ENCODE measurements at regions of chr1 and their contacts with region 1.

Region 1: GRCh38 chr1:236603991-236604904 is at the start of gene HEATR1:
- DNase-seq: peak; percentile 94
- ATAC-seq: peak; percentile 94
- H3K4me3 Mint-ChIP-seq: peak within 1 kb of the TSS; percentile 98
- H3K27ac Mint-ChIP-seq: peak within 1 kb of the TSS; percentile 94
- H3K4me1 Mint-ChIP-seq: peaks cover 21% of the 10 kb centered on the region
- H3K27me3 Mint-ChIP-seq: peaks cover 7% of the 10 kb centered on the region
- total RNA-seq, gene HEATR1: 82.4 to 89.1 TPM

Region 2: DNA sequence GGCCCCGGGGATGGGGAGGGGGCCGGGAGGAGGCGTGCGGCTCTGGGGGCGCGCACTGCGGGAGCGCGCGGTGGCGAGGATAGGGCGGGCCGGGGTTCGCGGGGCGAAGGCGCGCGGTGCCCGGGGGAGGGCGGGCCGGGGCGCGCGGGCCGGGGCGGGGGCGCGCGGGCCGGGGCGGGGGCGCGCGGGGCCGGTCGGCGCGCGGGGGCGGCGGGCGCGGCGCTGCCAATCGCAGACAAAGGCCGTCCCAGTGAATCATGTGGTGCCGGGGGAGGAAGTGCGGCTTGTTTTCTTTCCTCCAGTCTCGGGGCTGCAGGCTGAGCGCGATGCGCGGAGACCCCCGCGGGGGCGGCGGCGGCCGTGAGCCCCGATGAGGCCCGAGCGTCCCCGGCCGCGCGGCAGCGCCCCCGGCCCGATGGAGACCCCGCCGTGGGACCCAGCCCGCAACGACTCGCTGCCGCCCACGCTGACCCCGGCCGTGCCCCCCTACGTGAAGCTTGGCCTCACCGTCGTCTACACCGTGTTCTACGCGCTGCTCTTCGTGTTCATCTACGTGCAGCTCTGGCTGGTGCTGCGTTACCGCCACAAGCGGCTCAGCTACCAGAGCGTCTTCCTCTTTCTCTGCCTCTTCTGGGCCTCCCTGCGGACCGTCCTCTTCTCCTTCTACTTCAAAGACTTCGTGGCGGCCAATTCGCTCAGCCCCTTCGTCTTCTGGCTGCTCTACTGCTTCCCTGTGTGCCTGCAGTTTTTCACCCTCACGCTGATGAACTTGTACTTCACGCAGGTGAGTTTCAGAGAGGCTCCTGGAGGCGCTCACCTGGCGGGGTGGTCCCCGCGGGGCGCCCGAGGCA is 461.8 kb before region 1 on chr1 and contains the start of gene GPR137B:
- CTCF ChIA-PET with region 1: no interaction called
- POLR2A ChIA-PET with region 1: no interaction called
- intact Hi-C with region 1: loop called in 1 of 2 experiments (anchors 5 kb)
- DNase-seq: peak; percentile 78
- ATAC-seq: peak; percentile 67
- H3K4me3 Mint-ChIP-seq: peak within 1 kb of the TSS; percentile 95
- H3K27ac Mint-ChIP-seq: peak within 1 kb of the TSS; percentile 84
- H3K4me1 Mint-ChIP-seq: peaks cover 15% of the 10 kb centered on the region
- H3K27me3 Mint-ChIP-seq: peaks cover 34% of the 10 kb centered on the region
- total RNA-seq, gene GPR137B: 5.0 to 5.6 TPM

Region 3: DNA sequence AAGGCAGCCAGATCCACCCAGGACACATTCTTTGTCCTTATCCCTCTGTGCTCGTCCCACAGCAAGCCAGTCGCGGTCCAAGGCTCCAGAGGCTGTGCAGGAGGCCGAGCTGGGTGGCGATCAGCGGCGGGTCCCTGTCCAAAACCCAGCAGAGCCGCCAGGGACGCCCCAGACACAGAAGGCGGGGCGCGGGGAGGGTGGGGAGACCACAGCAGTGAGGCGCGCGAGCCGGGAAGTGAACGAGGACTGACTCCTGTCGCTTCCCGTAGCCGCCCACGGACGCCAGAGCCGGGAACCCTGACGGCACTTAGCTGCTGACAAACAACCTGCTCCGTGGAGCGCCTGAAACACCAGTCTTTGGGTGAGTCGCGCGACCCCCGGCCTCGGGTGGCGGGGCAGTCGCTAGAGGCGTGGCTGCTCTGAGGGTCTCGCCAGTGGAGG is 80.5 kb before region 1 on chr1 and contains the start of gene LGALS8:
- CTCF ChIA-PET with region 1: interaction called, 4 read pairs
- POLR2A ChIA-PET with region 1: interaction called, 3 read pairs
- intact Hi-C with region 1: loop called in 1 of 2 experiments (anchors 1 kb)
- DNase-seq: peak; percentile 94
- ATAC-seq: peak; percentile 79
- H3K4me3 Mint-ChIP-seq: peak within 1 kb of the TSS; percentile 99
- H3K27ac Mint-ChIP-seq: peak within 1 kb of the TSS; percentile 98
- H3K4me1 Mint-ChIP-seq: peaks cover 25% of the 10 kb centered on the region
- H3K27me3 Mint-ChIP-seq: no peaks in the 10 kb centered on the region
- total RNA-seq, gene LGALS8: 106 to 155 TPM

Region 4: DNA sequence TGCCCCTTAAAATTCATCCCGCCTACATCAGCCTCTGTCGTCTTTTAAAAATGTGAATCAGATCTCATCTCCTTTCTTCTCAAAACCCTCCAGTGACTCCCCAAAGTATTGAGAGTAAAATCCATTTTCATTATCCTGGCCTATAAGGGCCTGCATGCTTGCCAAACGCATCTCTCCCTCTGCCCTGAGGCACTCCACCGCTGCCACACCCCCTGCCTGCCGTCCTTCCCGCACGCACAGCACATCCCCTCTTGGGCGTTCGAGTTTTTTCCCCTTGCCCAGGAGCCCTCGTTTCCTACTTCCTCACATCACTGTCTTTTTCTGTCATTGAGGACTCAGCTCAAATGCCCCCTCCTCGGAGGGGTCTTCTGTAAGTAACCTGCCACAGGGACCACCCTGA is 137.5 kb after region 1 on chr1:
- CTCF ChIA-PET with region 1: no interaction called
- POLR2A ChIA-PET with region 1: no interaction called
- intact Hi-C with region 1: no loop called
- DNase-seq: no peak
- ATAC-seq: no peak
- H3K4me3 Mint-ChIP-seq: no peak overlapping the region
- H3K27ac Mint-ChIP-seq: no peak overlapping the region
- H3K4me1 Mint-ChIP-seq: no peaks in the 10 kb centered on the region
- H3K27me3 Mint-ChIP-seq: peaks cover 6% of the 10 kb centered on the region

Region 5: GRCh38 chr1:236795035-236795756 is 190.9 kb after region 1 on chr1 and contains the start of gene MTR:
- CTCF ChIA-PET with region 1: interaction called, 3 read pairs
- POLR2A ChIA-PET with region 1: interaction called, 11 read pairs
- intact Hi-C with region 1: loop called (anchors 1 kb)
- DNase-seq: peak; percentile 98
- ATAC-seq: peak; percentile 95
- H3K4me3 Mint-ChIP-seq: peak within 1 kb of the TSS; percentile 97
- H3K27ac Mint-ChIP-seq: peak within 1 kb of the TSS; percentile 100
- H3K4me1 Mint-ChIP-seq: peaks cover 33% of the 10 kb centered on the region
- H3K27me3 Mint-ChIP-seq: peaks cover 2% of the 10 kb centered on the region
- total RNA-seq, gene MTR: 57.3 to 64.8 TPM

Region 6: GRCh38 chr1:237386362-237387143 is 782.3 kb after region 1 on chr1:
- CTCF ChIA-PET with region 1: interaction called, 3 read pairs
- POLR2A ChIA-PET with region 1: no interaction called
- intact Hi-C with region 1: loop called (anchors 1 to 5 kb)
- DNase-seq: no peak
- ATAC-seq: no peak
- H3K4me3 Mint-ChIP-seq: no peak overlapping the region
- H3K27ac Mint-ChIP-seq: no peak overlapping the region
- H3K4me1 Mint-ChIP-seq: no peaks in the 10 kb centered on the region
- H3K27me3 Mint-ChIP-seq: peaks cover 2% of the 10 kb centered on the region